ENCODE measurements at regions of chr1 and their contacts with region 1.

Region 1: GRCh38 chr1:231240883-231241735 is at the start of gene GNPAT:
- DNase-seq: peak; percentile 86 to 97 (median 92)
- ATAC-seq: peak; percentile 98
- H3K4me3 ChIP-seq: peak within 1 kb of the TSS; percentile 98
- H3K4me3 Mint-ChIP-seq: peak within 1 kb of the TSS; percentile 90 to 99 (median 95)
- H3K27ac ChIP-seq: peak within 1 kb of the TSS; percentile 93
- H3K27ac Mint-ChIP-seq: peak within 1 kb of the TSS; percentile 92 to 99 (median 97)
- H3K4me1 ChIP-seq: peaks cover 17 to 44% of the 10 kb centered on the region in 2 donors
- H3K4me1 Mint-ChIP-seq: peaks cover 47 to 86% (median 76%) of the 10 kb centered on the region in 7 donors
- H3K27me3 ChIP-seq: no peaks in the 10 kb centered on the region
- H3K27me3 Mint-ChIP-seq: no peaks in the 10 kb centered on the region
- total RNA-seq, gene GNPAT: 17.3 to 41.0 (median 35.5) TPM

Region 2: GRCh38 chr1:230867903-230868735 is 373.0 kb before region 1 on chr1 and contains the start of gene C1orf198:
- CTCF ChIA-PET with region 1: no interaction called
- POLR2A ChIA-PET with region 1: no interaction called
- intact Hi-C with region 1: loop called in 1 of 2 experiments (anchors 2 kb)
- DNase-seq: peak; percentile 48 to 84 (median 69)
- ATAC-seq: peak; percentile 97
- H3K4me3 ChIP-seq: peak within 1 kb of the TSS; percentile 76
- H3K4me3 Mint-ChIP-seq: peak within 1 kb of the TSS; percentile 70 to 94 (median 88)
- H3K27ac ChIP-seq: peak within 1 kb of the TSS; percentile 67
- H3K27ac Mint-ChIP-seq: peak within 1 kb of the TSS in 8 of 9 donors; percentile 29 to 84 (median 62)
- H3K4me1 ChIP-seq: peaks cover 0 to 5% of the 10 kb centered on the region in 2 donors
- H3K4me1 Mint-ChIP-seq: peaks cover 10 to 33% (median 24%) of the 10 kb centered on the region in 7 donors
- H3K27me3 ChIP-seq: peaks cover 0 to 7% of the 10 kb centered on the region in 2 donors
- H3K27me3 Mint-ChIP-seq: peaks cover 13 to 38% (median 25%) of the 10 kb centered on the region in 5 donors
- total RNA-seq, gene C1orf198: 2.9 to 6.0 (median 3.7) TPM

Region 3: DNA sequence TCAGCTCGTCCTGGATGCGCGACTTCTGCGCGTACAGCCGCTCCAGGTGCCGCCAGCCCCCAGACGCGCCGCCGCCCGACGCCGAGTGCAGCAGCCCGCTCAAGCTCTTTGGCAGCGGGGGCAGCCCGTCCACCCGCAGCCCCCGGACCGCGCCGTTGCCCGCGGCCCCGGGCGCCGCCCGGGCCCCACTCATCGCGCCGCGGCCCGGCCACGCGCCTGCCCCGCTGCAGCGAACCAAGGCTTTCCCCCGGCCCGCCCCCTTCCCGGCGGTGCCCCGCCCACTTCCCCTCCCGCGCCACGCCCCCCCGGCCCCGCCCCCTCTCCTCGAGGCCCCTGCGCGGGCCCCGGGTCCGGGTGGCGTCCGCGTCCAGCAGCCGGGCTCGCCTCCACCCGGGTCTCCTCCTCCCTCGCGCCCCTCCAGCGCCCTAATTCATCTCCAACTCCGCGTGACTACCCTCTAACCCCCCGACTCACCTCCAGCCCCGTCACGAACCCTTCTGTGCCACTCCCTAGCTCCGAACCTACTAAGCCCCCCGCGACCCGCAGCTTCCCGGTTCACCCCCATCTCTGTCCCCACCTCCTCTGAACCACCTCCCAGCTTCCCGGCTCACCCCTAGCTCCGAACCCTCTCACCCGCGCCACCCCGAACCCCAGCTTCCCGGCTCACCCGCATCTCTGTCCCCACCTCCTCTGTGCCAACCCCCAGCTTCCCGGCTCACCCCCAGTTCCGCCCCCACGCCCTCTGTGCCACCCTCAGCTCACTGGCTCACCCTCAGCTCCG is 200.9 kb before region 1 on chr1 and contains the start of gene FAM89A:
- CTCF ChIA-PET with region 1: no interaction called
- POLR2A ChIA-PET with region 1: interaction called, 14 read pairs
- intact Hi-C with region 1: loop called (anchors 1 kb)
- DNase-seq: peak; percentile 44 to 79 (median 70)
- ATAC-seq: peak; percentile 91
- H3K4me3 ChIP-seq: peak within 1 kb of the TSS; percentile 67
- H3K4me3 Mint-ChIP-seq: peak within 1 kb of the TSS; percentile 81 to 90 (median 82)
- H3K27ac ChIP-seq: peak within 1 kb of the TSS; percentile 63
- H3K27ac Mint-ChIP-seq: peak within 1 kb of the TSS in 8 of 9 donors; percentile 36 to 83 (median 69)
- H3K4me1 ChIP-seq: peaks cover 10 to 13% of the 10 kb centered on the region in 2 donors
- H3K4me1 Mint-ChIP-seq: peaks cover 27 to 49% (median 36%) of the 10 kb centered on the region in 7 donors
- H3K27me3 ChIP-seq: no peaks in the 10 kb centered on the region
- H3K27me3 Mint-ChIP-seq: peaks cover 0 to 37% (median 0%) of the 10 kb centered on the region in 5 donors
- total RNA-seq, gene FAM89A: 4.5 to 9.0 (median 6.9) TPM

Region 4: DNA sequence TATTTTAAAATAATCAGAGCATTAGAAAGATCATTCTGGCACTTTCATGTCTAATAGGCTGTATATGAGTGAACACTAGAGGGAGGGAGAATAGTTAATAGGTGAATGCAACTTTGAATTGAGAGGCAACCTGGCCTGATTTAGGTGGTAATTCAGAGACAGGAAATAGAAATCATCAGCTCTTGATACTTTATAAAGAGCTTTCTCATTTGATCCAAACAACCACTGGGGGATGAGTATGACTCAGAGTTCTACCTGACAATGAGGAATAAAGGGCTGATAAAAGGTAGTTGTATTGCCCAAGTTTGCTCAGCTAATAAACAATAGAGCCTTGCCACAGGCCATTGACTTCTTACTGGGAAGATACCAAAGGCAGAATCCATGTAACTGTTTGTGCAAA is 195.8 kb before region 1 on chr1:
- CTCF ChIA-PET with region 1: no interaction called
- POLR2A ChIA-PET with region 1: interaction called, 14 read pairs
- intact Hi-C with region 1: loop called in 1 of 2 experiments (anchors 1 kb)
- DNase-seq: no peak
- ATAC-seq: no peak
- H3K4me3 ChIP-seq: no peak overlapping the region
- H3K4me3 Mint-ChIP-seq: no peak overlapping the region
- H3K27ac ChIP-seq: no peak overlapping the region
- H3K27ac Mint-ChIP-seq: peak overlapping the region in 1 of 9 donors; percentile 1
- H3K4me1 ChIP-seq: no peaks in the 10 kb centered on the region
- H3K4me1 Mint-ChIP-seq: peaks cover 6 to 15% (median 10%) of the 10 kb centered on the region in 7 donors
- H3K27me3 ChIP-seq: no peaks in the 10 kb centered on the region
- H3K27me3 Mint-ChIP-seq: peaks cover 6 to 70% (median 16%) of the 10 kb centered on the region in 5 donors

Region 5: DNA sequence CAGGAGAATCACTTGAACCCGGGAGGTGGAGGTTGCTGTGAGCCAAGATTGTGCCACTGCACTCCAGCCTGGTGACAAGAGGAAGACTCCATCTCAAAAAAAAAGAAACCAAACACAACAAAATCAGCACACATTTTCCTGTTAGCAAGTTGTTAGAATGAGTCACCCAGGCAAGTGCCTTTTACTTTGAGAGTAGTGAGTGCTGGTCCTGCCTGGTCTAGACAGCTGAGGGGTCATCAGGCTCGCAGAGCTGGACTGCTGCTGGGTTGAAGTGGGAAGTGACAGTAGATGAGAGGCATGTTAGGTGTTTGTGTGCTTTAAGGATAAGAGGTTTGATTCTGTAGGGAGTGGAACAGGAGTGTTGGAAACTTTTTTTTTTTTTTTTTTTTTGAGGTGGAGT is 31.8 kb after region 1 on chr1:
- CTCF ChIA-PET with region 1: no interaction called
- POLR2A ChIA-PET with region 1: interaction called, 5 read pairs
- intact Hi-C with region 1: loop called in 1 of 2 experiments (anchors 1 kb)
- DNase-seq: peak in 1 of 9 donors; percentile 33
- ATAC-seq: no peak
- H3K4me3 ChIP-seq: no peak overlapping the region
- H3K4me3 Mint-ChIP-seq: peak overlapping the region in 7 of 10 donors; percentile 28 to 81 (median 60)
- H3K27ac ChIP-seq: no peak overlapping the region
- H3K27ac Mint-ChIP-seq: peak overlapping the region; percentile 28 to 99 (median 93)
- H3K4me1 ChIP-seq: peaks cover 0 to 3% of the 10 kb centered on the region in 2 donors
- H3K4me1 Mint-ChIP-seq: peaks cover 6 to 52% (median 24%) of the 10 kb centered on the region in 7 donors
- H3K27me3 ChIP-seq: no peaks in the 10 kb centered on the region
- H3K27me3 Mint-ChIP-seq: no peaks in the 10 kb centered on the region